Activated naive CD4-positive, alpha-beta T cell treated with anti-CD3 and anti-CD28 coated beads, Interleukin-2, amount 10 ng/mL, durations not matched to agents 7 days and 5 days (primary cell): ENCODE measurements at regions of chr2 and their contacts with region 1.

Region 1: DNA sequence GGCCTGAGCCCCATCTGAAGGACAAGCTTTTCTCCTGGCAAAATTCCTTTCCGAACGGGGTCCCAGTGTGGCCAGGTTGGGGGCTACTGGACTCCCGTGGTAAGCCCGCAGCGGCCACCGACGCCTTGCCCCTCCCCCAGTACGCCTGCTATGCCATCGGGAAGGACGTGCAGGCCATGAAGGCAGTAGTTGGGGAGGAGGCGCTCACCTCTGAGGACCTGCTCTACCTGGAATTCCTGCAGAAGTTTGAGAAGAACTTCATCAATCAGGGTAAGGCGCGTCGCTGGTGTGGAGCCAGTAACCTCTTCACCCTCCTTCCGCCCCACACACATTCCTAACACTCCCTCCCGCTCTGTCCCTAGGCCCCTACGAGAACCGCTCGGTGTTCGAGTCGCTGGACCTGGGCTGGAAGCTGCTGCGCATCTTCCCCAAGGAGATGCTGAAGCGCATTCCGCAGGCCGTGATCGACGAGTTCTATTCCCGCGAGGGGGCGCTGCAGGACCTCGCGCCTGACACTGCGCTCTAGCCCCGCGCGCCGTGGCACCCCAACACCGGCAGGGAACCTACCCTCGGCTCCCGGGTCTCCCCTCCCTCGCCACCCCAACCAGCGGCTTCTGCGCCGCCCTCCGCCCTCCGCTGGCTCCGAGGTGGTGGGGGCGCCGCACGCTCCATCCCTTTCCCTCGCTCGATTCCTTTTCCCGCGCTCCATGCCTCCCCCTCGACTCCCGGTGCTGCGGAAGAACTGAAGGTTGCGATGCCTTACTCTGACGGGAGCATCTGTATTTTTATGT is 13.6 kb upstream of the ANKRD53 start:
- DNase-seq: peak; percentile 87
- H3K4me3 Mint-ChIP-seq: peak overlapping the region; percentile 82
- H3K27ac Mint-ChIP-seq: no peak overlapping the region
- H3K4me1 Mint-ChIP-seq: peaks cover 6% of the 10 kb centered on the region
- H3K27me3 Mint-ChIP-seq: peaks cover 64% of the 10 kb centered on the region

Region 2: GRCh38 chr2:70596739-70597138 is 368.1 kb before region 1 on chr2:
- CTCF ChIA-PET with region 1: no interaction called
- DNase-seq: no peak
- H3K4me3 Mint-ChIP-seq: no peak overlapping the region
- H3K27ac Mint-ChIP-seq: no peak overlapping the region
- H3K4me1 Mint-ChIP-seq: no peaks in the 10 kb centered on the region
- H3K27me3 Mint-ChIP-seq: peaks cover 11% of the 10 kb centered on the region

Region 3: DNA sequence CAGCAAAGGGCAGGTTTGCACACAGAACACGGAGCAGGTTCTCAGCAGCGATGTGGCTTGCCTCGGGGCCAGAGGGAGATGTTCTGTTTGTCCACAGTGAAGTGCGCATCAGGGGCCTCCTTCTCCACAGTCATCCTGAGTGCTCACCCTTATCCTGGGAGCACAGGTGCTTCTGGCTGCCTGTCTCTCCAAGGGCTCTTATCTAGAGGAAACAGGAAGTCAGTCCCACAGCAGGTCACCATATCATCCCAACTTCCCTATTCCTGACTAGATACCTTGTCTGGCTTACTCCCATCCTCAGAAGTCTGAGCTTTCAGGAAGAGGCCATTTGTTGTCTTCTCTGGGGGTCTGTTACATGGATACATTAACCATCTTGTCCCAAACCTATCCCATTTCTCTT is 129.1 kb before region 1 on chr2 and contains the start of gene CD207:
- CTCF ChIA-PET with region 1: no interaction called
- DNase-seq: no peak
- H3K4me3 Mint-ChIP-seq: no peak within 1 kb of the TSS
- H3K27ac Mint-ChIP-seq: no peak within 1 kb of the TSS
- H3K4me1 Mint-ChIP-seq: no peaks in the 10 kb centered on the region
- H3K27me3 Mint-ChIP-seq: peaks cover 53% of the 10 kb centered on the region

Region 4: DNA sequence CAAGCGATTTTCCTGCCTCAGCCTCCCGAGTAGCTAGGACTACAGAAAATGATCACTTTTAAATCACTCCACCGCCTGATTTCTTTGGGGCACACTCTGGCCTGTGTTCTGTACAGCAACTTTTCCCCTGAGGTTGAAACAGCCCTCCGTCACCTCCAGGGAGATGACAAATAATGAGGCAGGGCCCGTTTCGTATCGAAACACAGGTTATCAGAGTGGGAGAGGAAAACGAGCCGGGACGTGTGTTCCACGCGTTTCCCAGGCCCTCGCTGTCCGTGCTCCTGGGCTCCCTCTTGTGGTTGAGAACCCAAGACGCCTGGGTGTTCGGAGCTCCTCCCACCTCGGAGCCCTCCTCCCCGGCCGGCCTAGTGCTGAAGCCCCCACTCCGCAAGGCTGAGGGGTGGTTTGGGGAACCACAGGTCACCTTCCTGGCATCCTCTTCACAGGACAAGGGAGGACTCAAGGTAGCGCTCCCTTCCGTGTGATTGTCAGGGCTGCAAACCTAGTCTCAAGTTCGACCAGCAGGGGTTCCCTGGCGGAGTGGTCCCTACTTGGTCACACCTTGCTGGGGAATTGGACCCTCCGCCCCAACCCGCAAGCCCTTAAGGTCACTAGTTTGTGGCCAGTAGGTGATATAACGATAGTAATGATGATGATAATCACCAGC is 16.3 kb before region 1 on chr2:
- CTCF ChIA-PET with region 1: interaction called, 13 read pairs
- DNase-seq: peak; percentile 83
- H3K4me3 Mint-ChIP-seq: peak overlapping the region; percentile 39
- H3K27ac Mint-ChIP-seq: no peak overlapping the region
- H3K4me1 Mint-ChIP-seq: peaks cover 12% of the 10 kb centered on the region
- H3K27me3 Mint-ChIP-seq: peaks cover 53% of the 10 kb centered on the region

Region 5: DNA sequence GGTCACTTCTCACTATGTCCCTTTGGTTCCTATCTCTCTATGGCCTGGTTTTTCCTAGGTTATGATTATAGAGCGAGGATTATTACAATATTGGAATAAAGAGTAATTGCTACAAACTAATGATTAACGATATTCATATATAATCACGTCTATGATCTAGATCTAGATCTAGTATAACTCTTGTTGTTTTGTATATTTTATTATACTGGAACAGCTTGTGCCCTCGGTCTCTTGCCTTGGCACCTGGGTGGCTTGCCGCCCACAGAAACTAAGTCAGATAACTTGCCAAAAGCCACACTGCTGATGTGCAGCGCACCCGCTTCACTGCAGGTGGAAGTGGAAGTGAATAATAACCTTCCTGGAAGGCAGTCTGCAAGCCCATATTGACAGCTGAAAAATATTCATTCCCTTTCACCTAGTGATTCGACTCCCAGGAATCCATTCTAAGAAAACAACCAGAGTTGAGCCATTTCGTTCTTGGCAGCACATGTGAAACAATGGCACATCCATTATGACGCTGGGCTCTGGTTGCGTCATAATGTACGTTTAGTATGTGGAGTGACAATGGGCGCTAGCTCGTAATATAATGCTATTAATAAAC is 12.9 kb after region 1 on chr2:
- CTCF ChIA-PET with region 1: interaction called, 43 read pairs
- DNase-seq: peak; percentile 49
- H3K4me3 Mint-ChIP-seq: peak overlapping the region; percentile 61
- H3K27ac Mint-ChIP-seq: peak overlapping the region; percentile 88
- H3K4me1 Mint-ChIP-seq: peaks cover 18% of the 10 kb centered on the region
- H3K27me3 Mint-ChIP-seq: peaks cover 13% of the 10 kb centered on the region

Region 6: GRCh38 chr2:70984576-70985282 is 19.9 kb after region 1 on chr2:
- CTCF ChIA-PET with region 1: interaction called, 43 read pairs
- DNase-seq: peak; percentile 89
- H3K4me3 Mint-ChIP-seq: peak overlapping the region; percentile 33
- H3K27ac Mint-ChIP-seq: peak overlapping the region; percentile 56
- H3K4me1 Mint-ChIP-seq: peaks cover 17% of the 10 kb centered on the region
- H3K27me3 Mint-ChIP-seq: no peaks in the 10 kb centered on the region

Region 7: GRCh38 chr2:71000780-71001591 is 36.2 kb after region 1 on chr2:
- CTCF ChIA-PET with region 1: interaction called, 32 read pairs
- DNase-seq: peak; percentile 86
- H3K4me3 Mint-ChIP-seq: peak overlapping the region; percentile 54
- H3K27ac Mint-ChIP-seq: peak overlapping the region; percentile 55
- H3K4me1 Mint-ChIP-seq: peaks cover 34% of the 10 kb centered on the region
- H3K27me3 Mint-ChIP-seq: peaks cover 23% of the 10 kb centered on the region

Region 8: DNA sequence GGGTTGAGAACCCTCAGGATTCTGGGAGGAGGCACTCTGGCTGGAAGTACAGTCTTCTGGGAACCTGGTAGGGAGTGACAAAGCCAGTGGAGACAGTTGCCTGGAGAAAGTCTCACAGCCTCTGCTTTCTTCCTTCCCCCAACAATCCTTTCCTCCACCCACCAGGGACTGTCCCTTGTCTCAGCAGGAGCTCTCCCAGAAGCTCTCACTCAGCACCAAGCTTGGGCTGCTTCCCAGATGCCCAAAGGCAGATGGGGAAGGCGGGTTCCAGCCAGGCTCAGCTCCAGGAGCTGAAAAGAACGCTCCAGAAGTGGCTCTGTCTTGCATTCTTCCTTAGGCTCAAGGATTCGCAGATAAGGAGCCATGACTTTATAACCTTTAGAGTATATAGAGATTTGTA is 96.1 kb after region 1 on chr2:
- CTCF ChIA-PET with region 1: no interaction called
- DNase-seq: no peak
- H3K4me3 Mint-ChIP-seq: no peak overlapping the region
- H3K27ac Mint-ChIP-seq: no peak overlapping the region
- H3K4me1 Mint-ChIP-seq: no peaks in the 10 kb centered on the region
- H3K27me3 Mint-ChIP-seq: peaks cover 40% of the 10 kb centered on the region

Region 9: DNA sequence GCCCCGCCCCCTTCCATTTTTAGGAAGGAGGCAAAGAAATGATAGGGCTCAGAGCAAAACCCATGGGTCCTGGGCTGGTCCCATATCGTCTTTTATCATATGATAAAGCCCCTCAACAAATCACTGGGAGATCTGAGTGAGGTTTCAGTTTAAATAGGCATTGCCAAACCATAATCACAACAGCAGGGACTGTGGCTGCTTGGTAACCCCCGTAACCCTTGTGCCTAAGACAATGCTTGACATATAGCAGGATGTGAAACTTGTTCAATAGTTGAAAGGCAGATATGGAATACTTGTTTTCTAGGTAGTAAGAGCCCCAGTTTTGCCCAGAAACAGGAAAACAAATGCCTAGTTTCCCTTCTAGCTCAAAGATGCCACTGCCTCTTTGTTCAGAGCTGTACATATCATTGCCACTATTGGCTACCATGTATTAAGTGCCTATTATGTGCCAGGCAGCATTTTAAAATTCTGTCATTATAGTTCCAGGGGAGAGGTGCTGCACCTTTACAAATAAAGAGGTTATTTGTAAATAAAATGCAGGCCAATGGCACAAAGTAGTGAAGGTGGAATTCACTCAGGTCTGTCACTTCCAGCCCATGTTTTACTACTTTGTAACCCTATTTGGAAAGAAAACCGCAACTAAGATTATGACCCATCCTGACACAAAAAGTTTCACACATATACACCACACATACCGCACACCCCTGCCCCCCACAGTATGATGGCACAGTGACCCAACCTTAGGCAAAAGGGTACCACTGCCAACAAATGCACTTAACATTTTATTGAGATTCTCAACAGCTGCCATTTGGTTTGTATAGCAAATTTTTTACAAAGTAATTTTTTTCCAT is 117.8 kb after region 1 on chr2:
- CTCF ChIA-PET with region 1: no interaction called
- DNase-seq: no peak
- H3K4me3 Mint-ChIP-seq: no peak overlapping the region
- H3K27ac Mint-ChIP-seq: no peak overlapping the region
- H3K4me1 Mint-ChIP-seq: peaks cover 16% of the 10 kb centered on the region
- H3K27me3 Mint-ChIP-seq: peaks cover 12% of the 10 kb centered on the region